ENCODE measurements at regions of chr13 and their contacts with region 1.

Region 1: DNA sequence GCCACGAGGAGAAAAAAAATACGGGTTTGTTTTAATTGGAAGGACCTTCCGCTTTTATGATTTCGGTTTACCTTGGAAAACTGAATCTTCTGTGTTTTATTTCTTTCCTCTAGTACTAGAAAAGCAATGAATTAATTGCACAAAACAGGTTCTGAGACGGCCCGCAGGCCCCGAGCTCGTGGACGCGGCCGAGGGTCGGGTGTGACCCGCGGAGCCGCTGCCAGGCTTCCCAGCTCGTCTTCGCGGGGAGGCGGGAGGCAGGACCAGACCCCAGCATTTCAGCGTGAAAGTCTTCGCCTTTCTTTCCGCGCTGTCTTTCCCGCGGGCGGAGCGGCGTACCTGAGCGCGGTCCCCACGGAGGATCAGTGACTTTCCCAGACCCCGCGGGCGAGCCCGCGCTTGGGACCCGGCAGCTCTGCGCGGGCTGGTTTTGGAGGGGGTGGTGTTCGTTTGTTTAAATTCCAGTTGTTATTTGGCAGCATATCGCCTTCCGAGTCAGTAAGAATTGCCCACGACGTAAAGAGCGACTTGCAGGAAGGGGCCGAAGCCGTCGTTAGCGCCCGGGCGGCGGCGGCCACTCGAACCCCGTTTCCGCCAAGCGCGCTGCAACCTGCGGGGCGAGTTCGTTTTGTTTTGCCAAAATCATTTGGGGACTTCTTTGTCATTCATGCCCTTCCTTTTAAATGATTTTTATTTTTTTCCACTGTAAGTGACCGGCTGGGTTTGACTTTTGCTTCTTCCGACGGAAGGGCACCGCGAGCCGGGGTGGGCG is 76.2 kb downstream of the ZIC5 start:
- DNase-seq: peak in 1 of 2 donors; percentile 15
- ATAC-seq: peak; percentile 35

Region 2: DNA sequence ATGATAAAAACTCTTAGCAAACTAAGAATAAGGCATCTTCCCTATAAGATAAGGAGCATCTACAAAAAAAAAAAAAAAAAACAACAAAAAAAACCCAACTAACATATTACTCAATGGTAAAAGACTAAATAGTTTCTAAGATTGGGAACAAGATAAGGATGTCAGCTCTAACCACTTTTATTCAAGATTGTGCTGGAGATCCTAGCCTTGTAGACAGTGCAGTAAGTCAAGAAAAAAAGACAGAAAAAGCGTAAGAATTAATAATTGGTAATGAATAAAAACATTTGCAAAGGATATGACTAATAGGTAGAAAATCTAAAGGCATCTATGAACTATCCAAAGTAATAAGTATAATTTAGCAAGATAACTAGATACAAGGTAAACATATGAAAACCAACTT is 119.2 kb after region 1 on chr13:
- intact Hi-C with region 1: no loop called
- DNase-seq: no peak
- ATAC-seq: no peak

Region 3: GRCh38 chr13:100100115-100100879 is 204.9 kb after region 1 on chr13:
- intact Hi-C with region 1: no loop called
- DNase-seq: no peak
- ATAC-seq: peak; percentile 91

Region 4: GRCh38 chr13:100235311-100235901 is 340.0 kb after region 1 on chr13:
- intact Hi-C with region 1: loop called in 1 of 2 experiments (anchors 10 kb)
- DNase-seq: no peak
- ATAC-seq: peak; percentile 32